Activated CD4-positive, alpha-beta T cell treated with anti-CD3 and anti-CD28 coated beads for 36 hours (primary cell): ENCODE measurements at regions of chr13 and their contacts with region 1.

Region 1: DNA sequence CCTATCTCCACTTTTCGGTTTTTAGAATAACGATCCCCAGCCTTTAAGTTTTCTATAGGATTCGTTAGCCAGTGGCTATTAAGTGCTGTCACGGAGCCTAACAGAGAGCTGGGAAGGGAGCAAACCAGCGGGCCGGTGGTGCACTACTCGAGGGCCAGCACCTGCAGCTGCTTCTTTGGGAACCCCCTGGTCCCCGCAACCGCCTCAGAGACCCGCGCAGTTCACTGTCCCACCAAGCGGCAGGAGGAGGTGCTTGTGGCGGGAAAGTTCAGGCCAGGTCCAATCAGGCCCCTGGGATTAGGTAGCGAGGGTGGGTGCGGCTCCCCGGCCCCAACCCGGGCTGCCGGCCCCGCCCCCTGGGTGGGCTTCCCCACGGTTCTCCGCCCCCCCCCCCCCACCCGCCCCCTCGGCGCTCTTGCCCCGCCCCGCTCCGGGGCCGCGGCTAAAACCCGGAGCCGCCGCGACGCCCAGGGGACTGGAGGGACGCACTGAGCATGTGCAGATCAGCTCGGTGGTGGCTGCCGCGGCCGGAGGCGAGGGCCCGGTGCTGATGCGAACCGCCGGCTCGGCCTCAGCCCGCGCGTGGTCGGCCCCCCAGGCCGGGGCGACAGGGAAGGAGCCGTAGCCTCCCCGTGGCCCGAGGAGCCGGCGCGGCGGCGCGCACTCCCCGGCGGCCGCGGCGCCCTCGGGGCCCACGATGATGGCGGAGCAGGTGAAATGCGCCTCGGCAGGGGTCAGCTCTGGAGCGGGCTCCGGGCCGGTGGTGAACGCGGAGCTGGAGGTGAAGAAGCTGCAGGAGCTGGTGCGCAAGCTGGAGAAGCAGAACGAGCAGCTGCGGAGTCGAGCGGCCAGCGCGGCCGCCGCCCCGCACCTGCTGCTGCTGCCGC is at the start of gene SLAIN1:
- DNase-seq: peak; percentile 88
- ATAC-seq: peak; percentile 73
- H3K4me3 Mint-ChIP-seq: peak within 1 kb of the TSS; percentile 95
- H3K27ac Mint-ChIP-seq: peak within 1 kb of the TSS; percentile 60
- H3K4me1 Mint-ChIP-seq: peaks cover 35% of the 10 kb centered on the region
- H3K27me3 Mint-ChIP-seq: no peaks in the 10 kb centered on the region
- total RNA-seq, gene SLAIN1: 26.7 to 39.8 TPM

Region 2: GRCh38 chr13:76886292-76887075 is 811.0 kb before region 1 on chr13 and contains the start of gene KCTD12:
- CTCF ChIA-PET with region 1: no interaction called
- POLR2A ChIA-PET with region 1: no interaction called
- intact Hi-C with region 1: loop called in 1 of 2 experiments (anchors 2 kb)
- DNase-seq: peak; percentile 86
- ATAC-seq: peak; percentile 78
- H3K4me3 Mint-ChIP-seq: peak within 1 kb of the TSS; percentile 93
- H3K27ac Mint-ChIP-seq: peak within 1 kb of the TSS; percentile 90
- H3K4me1 Mint-ChIP-seq: peaks cover 29% of the 10 kb centered on the region
- H3K27me3 Mint-ChIP-seq: peaks cover 8% of the 10 kb centered on the region
- total RNA-seq, gene KCTD12: 9.9 to 11.1 TPM

Region 3: GRCh38 chr13:77026818-77027585 is 670.5 kb before region 1 on chr13 and contains the start of gene FBXL3:
- CTCF ChIA-PET with region 1: no interaction called
- POLR2A ChIA-PET with region 1: no interaction called
- intact Hi-C with region 1: loop called in 1 of 2 experiments (anchors 1 kb)
- DNase-seq: peak; percentile 89
- ATAC-seq: peak; percentile 59
- H3K4me3 Mint-ChIP-seq: peak within 1 kb of the TSS; percentile 92
- H3K27ac Mint-ChIP-seq: peak within 1 kb of the TSS; percentile 96
- H3K4me1 Mint-ChIP-seq: peaks cover 47% of the 10 kb centered on the region
- H3K27me3 Mint-ChIP-seq: peaks cover 2% of the 10 kb centered on the region
- total RNA-seq, gene FBXL3: 28.4 to 31.6 TPM

Region 4: GRCh38 chr13:77729502-77730221 is 32.2 kb after region 1 on chr13:
- CTCF ChIA-PET with region 1: interaction called, 4 read pairs
- POLR2A ChIA-PET with region 1: no interaction called
- intact Hi-C with region 1: loop called in 1 of 2 experiments (anchors 2 kb)
- DNase-seq: peak; percentile 62
- ATAC-seq: peak; percentile 96
- H3K4me3 Mint-ChIP-seq: peak overlapping the region; percentile 21
- H3K27ac Mint-ChIP-seq: peak overlapping the region; percentile 42
- H3K4me1 Mint-ChIP-seq: peaks cover 34% of the 10 kb centered on the region
- H3K27me3 Mint-ChIP-seq: no peaks in the 10 kb centered on the region

Region 5: DNA sequence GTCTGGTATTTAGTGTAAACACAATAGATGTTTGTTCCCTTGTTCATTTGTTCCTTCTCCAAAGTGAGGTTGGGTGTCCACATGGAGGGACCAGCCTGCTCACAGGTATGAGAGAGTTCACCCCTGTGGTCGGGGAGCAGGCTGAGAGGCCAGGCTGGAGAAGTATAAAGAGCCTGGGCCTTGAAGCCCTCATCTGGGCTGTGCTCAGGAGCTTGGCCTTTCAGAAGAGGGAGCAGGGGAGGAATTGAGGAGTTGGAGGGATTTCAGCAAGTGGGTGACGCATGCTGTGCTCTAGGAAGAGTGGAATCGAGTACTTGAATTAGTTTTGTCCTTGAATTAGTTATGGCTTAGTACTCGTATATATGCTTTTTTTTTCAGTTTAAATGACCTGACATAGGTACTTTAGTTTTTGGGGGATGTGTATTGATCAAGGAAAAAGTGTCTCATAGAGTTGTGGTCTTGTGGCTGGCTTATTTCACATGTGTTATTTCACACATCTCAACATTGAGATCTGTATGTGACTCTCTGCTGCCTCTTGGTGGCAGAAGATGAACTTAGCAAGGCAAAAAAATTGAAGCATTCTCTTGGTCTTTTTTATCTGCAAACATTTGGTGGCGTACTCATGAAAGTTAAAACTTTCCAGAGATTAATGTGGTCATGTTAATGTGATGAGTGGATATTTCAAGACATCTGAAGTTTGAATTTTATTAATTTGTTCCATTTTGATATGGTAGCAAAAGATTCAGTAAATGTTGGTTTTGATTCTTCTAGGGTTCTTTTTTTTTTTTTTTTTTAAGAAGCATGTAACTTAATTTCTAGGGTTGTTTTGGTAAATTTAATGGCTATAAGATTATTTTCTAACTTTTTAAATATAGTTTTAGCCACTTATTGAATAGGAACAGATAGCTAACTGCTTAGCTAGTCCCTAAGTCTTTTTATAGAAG is 54.3 kb after region 1 on chr13:
- CTCF ChIA-PET with region 1: interaction called, 3 read pairs
- POLR2A ChIA-PET with region 1: no interaction called
- intact Hi-C with region 1: loop called (anchors 1 to 2 kb)
- DNase-seq: peak; percentile 60
- ATAC-seq: peak; percentile 90
- H3K4me3 Mint-ChIP-seq: no peak overlapping the region
- H3K27ac Mint-ChIP-seq: peak overlapping the region; percentile 28
- H3K4me1 Mint-ChIP-seq: peaks cover 18% of the 10 kb centered on the region
- H3K27me3 Mint-ChIP-seq: no peaks in the 10 kb centered on the region

Region 6: GRCh38 chr13:78067290-78067689 is 369.8 kb after region 1 on chr13:
- CTCF ChIA-PET with region 1: no interaction called
- POLR2A ChIA-PET with region 1: no interaction called
- intact Hi-C with region 1: no loop called
- DNase-seq: no peak
- ATAC-seq: no peak
- H3K4me3 Mint-ChIP-seq: no peak overlapping the region
- H3K27ac Mint-ChIP-seq: no peak overlapping the region
- H3K4me1 Mint-ChIP-seq: no peaks in the 10 kb centered on the region
- H3K27me3 Mint-ChIP-seq: peaks cover 2% of the 10 kb centered on the region

Region 7: DNA sequence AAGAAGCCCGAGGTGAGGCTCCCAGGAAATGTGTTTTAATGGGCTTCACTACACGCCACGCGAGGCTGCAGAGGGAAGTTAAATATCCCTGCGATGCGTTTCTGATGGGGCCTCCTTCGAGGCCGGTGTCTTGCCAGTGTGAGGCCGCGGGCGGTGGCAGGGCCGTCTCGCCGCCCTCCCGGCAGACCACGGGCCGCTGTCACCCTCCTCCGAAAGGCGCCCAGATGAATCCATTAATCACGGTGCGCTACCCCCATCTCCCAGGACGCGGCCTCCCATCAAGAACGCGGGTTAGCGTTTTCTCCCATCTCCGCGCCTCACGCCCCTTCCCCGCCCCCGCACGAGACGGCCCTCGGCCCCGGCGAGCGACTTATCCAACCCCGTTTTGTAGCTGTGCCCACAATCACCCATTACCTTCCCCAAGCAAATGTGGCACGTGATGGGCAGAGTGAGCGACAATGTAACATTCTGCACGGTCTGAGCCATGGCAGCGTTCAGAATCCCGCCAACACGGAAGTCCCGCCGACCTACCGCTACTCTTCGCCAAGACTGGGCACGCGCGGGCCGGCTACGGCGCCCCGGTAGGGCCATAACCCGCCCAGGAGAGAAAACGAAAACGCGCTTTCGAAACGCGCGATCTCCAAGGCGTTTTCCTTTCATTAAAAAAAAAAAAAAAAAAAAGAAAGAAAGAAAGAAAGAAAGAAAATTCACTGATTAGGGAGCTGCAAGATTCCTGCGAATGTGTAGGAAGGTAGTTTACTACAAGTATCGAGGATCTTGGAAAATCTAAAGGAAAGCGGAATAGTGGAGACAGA is 961.4 kb after region 1 on chr13 and contains the start of gene OBI1:
- CTCF ChIA-PET with region 1: no interaction called
- POLR2A ChIA-PET with region 1: no interaction called
- intact Hi-C with region 1: loop called in 1 of 2 experiments (anchors 5 kb)
- DNase-seq: peak; percentile 94
- ATAC-seq: peak; percentile 93
- H3K4me3 Mint-ChIP-seq: peak within 1 kb of the TSS; percentile 85
- H3K27ac Mint-ChIP-seq: peak within 1 kb of the TSS; percentile 97
- H3K4me1 Mint-ChIP-seq: peaks cover 33% of the 10 kb centered on the region
- H3K27me3 Mint-ChIP-seq: no peaks in the 10 kb centered on the region
- total RNA-seq, gene OBI1: 20.5 to 20.6 TPM